IMR-90 (cell line): ENCODE measurements at regions of chr10 and their contacts with region 1.

Region 1: GRCh38 chr10:3828404-3829155 is 43.6 kb upstream of the KLF6 start:
- DNase-seq: peak; percentile 86
- ATAC-seq: peak; percentile 46
- H3K4me3 ChIP-seq: peak overlapping the region; percentile 45; the same call in 1 of the 2 replicates
- H3K27ac ChIP-seq: peak overlapping the region; percentile 78
- H3K4me1 ChIP-seq: peaks cover 26% of the 10 kb centered on the region
- H3K27me3 ChIP-seq: no peaks in the 10 kb centered on the region
- CTCF ChIP-seq: no peak
- POLR2A ChIP-seq: no peak; the same call in 1 of the 2 replicates
- RAD21 ChIP-seq: no peak

Region 2: GRCh38 chr10:3811291-3811870 is 17.2 kb before region 1 on chr10:
- CTCF ChIA-PET with region 1: no interaction called
- POLR2A ChIA-PET with region 1: no interaction called
- dilution Hi-C with region 1: no loop called
- in situ Hi-C with region 1: no loop called
- intact Hi-C with region 1: loop called (anchors 2 kb)
- DNase-seq: peak; percentile 71
- ATAC-seq: peak; percentile 63
- H3K4me3 ChIP-seq: peak overlapping the region; percentile 17; the same call in 1 of the 2 replicates
- H3K27ac ChIP-seq: peak overlapping the region; percentile 91
- H3K4me1 ChIP-seq: peaks cover 33% of the 10 kb centered on the region
- H3K27me3 ChIP-seq: no peaks in the 10 kb centered on the region
- CTCF ChIP-seq: no peak
- POLR2A ChIP-seq: no peak
- RAD21 ChIP-seq: no peak

Region 3: GRCh38 chr10:4319870-4320367 is 491.3 kb after region 1 on chr10:
- CTCF ChIA-PET with region 1: no interaction called
- POLR2A ChIA-PET with region 1: interaction called, 16 read pairs
- dilution Hi-C with region 1: no loop called
- in situ Hi-C with region 1: no loop called
- intact Hi-C with region 1: no loop called
- DNase-seq: no peak
- ATAC-seq: no peak
- H3K4me3 ChIP-seq: no peak overlapping the region
- H3K27ac ChIP-seq: no peak overlapping the region
- H3K4me1 ChIP-seq: no peaks in the 10 kb centered on the region
- H3K27me3 ChIP-seq: no peaks in the 10 kb centered on the region
- CTCF ChIP-seq: no peak
- POLR2A ChIP-seq: no peak
- RAD21 ChIP-seq: no peak

Region 4: GRCh38 chr10:4448030-4448429 is 619.5 kb after region 1 on chr10:
- CTCF ChIA-PET with region 1: no interaction called
- POLR2A ChIA-PET with region 1: no interaction called
- dilution Hi-C with region 1: no loop called
- in situ Hi-C with region 1: no loop called
- intact Hi-C with region 1: no loop called
- DNase-seq: no peak
- ATAC-seq: no peak
- H3K4me3 ChIP-seq: no peak overlapping the region
- H3K27ac ChIP-seq: no peak overlapping the region
- H3K4me1 ChIP-seq: no peaks in the 10 kb centered on the region; the same call in 1 of the 2 replicates
- H3K27me3 ChIP-seq: no peaks in the 10 kb centered on the region
- CTCF ChIP-seq: no peak
- POLR2A ChIP-seq: no peak
- RAD21 ChIP-seq: no peak